Ovary (tissue), 10 donors: ENCODE measurements at regions of chr5 and their contacts with region 1.

Region 1: DNA sequence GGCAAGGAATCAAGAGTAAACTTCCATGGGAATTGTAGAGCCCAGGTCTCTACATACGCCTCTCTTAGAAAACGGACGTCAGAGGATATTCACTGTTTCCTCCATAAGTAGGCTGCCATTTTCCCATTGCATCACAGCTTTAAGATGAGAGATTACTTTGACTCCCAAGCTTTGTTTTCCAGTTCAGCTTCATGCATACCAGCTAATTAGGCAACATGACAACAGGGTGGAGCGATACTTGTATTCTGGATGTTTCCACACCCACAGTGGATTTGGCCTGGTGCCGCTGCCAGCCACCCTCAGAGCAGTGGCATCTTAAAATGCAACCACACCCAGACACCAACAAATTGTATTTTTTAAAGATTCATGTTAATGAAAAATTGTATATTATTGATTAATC is 20.9 kb upstream of the SPINK5 start:
- DNase-seq: no peak
- H3K4me3 ChIP-seq: no peak overlapping the region
- H3K27ac ChIP-seq: no peak overlapping the region
- H3K4me1 ChIP-seq: no peaks in the 10 kb centered on the region
- H3K27me3 ChIP-seq: no peaks in the 10 kb centered on the region
- CTCF ChIP-seq: no peak
- EP300 ChIP-seq: no peak
- POLR2A ChIP-seq: no peak

Region 2: DNA sequence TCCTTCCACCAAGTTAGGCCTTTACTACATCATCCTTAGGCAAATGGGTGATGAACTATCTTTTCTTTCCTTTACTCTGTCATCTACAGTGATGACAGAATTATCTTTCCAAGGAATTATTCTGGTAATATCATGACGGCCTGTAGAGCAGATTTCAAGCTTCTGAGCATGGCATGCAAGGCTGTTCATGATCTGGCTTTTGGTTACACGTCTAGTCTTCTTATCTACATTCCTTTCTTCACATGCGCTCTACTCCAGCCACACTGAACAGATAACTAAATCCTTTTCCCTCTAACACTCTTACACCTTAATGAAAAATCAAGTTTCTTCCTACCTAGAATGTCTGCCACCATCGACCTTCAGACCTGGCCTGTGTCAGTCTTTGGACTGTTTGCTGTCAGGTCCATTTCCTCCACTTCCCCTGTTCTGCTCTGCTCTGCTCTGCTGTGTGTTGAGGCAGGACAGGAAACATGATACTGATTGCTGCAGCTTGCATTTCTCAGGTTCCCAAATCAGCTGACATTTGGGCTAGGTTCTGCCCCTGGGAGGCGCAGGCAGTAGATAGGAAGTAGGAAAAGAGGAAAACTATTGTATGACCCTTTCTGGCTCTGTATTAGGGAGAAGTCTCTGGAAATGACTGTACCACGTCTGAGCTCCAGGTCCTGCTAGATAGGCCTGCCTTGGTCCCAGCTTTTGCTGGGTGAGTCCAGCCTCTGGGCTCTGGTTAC is 160.1 kb before region 1 on chr5:
- intact Hi-C with region 1: no loop called
- DNase-seq: no peak
- H3K4me3 ChIP-seq: no peak overlapping the region
- H3K27ac ChIP-seq: no peak overlapping the region
- H3K4me1 ChIP-seq: no peaks in the 10 kb centered on the region
- H3K27me3 ChIP-seq: no peaks in the 10 kb centered on the region
- CTCF ChIP-seq: no peak
- EP300 ChIP-seq: no peak
- POLR2A ChIP-seq: no peak

Region 3: DNA sequence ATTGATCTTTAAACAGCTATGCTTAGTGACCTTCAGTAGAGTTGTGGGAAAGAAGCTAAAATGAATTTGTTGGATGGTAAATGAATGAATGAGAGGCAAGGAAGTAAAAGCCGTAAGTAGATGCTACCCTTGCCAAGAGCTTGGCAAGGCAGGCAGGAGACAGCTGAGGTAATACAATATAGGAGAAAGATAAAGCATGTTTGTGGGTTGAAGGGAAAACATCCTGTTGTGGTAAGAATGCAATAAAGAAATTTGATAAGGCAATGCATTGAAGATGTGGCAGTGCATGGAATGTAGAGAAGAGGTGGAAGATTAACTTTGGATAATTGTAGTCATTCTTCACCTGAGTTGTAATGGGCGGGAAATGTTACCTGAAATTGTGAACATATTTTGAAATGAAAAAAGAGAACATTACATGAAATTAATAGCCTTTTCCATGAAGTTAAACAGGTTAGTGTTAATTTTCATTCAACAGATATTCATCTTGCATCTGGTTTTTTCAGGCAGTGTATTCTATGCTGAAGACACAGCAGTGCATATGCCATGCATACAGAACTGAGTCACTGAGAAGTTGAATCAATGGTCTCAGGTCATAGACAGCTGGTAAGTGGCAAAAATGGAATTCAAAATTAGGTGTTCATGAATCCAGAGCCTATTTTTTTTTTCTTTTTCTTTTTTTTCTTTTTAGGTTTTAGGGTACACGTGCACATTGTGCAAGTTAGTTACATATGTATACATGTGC is 22.5 kb before region 1 on chr5:
- intact Hi-C with region 1: loop called in 1 of 4 experiments (anchors 1 kb)
- DNase-seq: no peak
- H3K4me3 ChIP-seq: no peak overlapping the region
- H3K27ac ChIP-seq: no peak overlapping the region
- H3K4me1 ChIP-seq: no peaks in the 10 kb centered on the region
- H3K27me3 ChIP-seq: no peaks in the 10 kb centered on the region
- CTCF ChIP-seq: no peak
- EP300 ChIP-seq: no peak
- POLR2A ChIP-seq: no peak